GM10248 (cell line): ENCODE measurements at regions of chr5 and their contacts with region 1.

Region 1: DNA sequence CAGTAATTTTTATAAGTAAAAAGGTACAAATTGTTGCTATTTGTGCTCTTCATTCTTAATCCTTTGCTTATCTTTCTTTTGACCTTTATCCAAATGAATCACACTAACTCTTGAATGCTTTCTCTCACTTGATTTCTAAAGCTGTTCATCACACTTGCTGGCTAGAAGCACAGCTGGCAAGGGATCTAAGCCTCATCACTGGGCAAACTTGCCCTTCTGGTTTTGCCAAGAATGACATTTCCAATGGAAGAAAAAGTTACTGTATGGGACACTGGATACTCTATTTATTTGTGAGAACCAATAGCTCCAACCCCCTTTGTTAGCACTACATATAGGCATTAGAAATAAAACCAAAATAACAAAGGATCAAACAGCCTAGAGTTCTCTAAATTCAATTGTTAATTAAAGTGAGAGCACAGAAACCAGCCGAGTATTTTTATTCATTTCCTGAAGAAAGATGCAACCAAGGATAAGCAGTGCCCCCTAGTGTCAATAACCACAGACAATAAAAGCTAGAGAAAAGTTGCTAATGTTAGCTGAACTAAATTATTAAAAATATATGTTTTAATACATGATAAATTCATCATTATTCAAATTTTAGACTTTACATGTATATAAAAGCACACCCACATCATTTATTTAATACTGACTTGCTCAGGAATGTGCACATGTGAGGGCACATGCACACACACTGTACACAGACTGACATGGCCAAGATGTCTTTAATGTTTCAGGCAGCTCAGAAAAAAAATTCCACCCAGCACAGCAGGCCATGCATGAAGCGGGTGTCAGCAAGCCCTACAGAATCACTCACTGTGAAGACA is 59.8 kb upstream of the POU5F2 start:
- DNase-seq: peak; percentile 17
- CTCF ChIP-seq: peak; percentile 65

Region 2: GRCh38 chr5:93596676-93597461 is 204.3 kb before region 1 on chr5:
- CTCF ChIA-PET with region 1: interaction called, 13 read pairs
- POLR2A ChIA-PET with region 1: no interaction called
- DNase-seq: no peak
- CTCF ChIP-seq: no peak

Region 3: GRCh38 chr5:93620487-93621326 is 180.5 kb before region 1 on chr5:
- CTCF ChIA-PET with region 1: interaction called, 13 read pairs
- POLR2A ChIA-PET with region 1: no interaction called
- DNase-seq: peak; percentile 78
- CTCF ChIP-seq: peak; percentile 3

Region 4: DNA sequence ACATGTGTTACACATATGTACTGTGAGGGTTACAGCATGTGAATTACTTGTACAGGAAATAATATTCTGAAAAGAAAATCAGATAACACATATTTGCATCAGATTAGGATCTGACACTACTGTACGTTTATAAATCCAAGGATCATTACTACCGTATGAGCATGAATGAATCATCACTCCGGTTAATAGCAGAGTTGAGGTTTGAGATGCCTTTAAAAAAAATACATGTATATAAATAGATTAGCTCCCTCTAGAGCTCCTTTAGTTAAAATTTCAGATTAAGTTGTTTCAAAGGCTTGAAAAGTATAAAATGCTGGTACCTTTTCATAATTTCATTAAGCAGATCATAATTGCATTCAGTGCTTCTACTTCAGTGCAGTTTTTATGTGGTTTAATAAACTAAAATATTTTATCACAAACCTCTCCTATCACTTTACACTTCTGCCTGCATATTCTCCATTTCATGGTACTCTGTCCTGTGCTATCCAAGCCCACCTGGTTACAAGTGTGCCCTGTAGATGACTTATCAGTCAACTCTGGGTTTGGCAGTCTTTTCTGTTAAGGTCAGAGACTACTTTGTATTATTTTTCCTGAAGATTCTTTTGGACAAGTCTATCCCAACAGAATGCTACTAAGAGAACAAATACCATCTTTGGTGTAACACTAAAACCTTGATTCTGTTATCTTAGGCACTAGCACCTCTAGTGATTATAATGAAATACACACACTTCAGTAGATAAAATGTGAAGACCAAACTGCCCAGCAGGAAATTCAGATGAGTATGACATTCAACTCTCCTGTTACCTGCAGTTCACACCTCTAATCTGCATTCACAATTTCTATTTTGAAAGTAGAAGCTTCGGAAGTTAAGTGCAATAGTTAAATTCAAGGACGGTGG is 11.8 kb before region 1 on chr5:
- CTCF ChIA-PET with region 1: interaction called, 26 read pairs
- POLR2A ChIA-PET with region 1: no interaction called
- DNase-seq: no peak
- CTCF ChIP-seq: no peak